Right lobe of liver (tissue), 6 donors: ENCODE measurements at regions of chr3 and their contacts with region 1.

Region 1: DNA sequence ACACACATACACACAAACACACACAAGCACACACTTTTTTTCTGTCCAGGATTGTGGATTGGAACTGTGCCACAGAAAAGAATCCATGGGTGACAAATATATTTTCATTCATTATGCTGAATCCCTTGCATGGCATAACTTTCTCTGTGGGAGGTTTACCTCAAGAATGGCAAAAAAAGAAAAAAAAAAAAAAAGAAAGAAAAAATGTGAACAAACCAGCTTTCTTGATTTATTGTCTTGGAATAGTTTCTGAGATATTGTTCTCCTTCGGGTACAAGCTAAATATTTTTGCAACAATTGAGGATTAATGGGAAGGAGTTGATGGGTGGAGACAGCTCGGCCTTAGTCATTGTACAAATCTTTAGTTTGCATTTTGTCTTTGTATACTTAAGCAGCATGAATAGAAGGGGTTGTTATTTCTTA is 153.1 kb downstream of the GMNC start:
- DNase-seq: no peak
- ATAC-seq: no peak
- H3K4me3 ChIP-seq: no peak overlapping the region
- H3K27ac ChIP-seq: no peak overlapping the region
- H3K4me1 ChIP-seq: no peaks in the 10 kb centered on the region
- H3K27me3 ChIP-seq: no peaks in the 10 kb centered on the region
- CTCF ChIP-seq: no peak
- POLR2A ChIP-seq: no peak

Region 2: GRCh38 chr3:190666821-190667220 is 42.5 kb before region 1 on chr3:
- intact Hi-C with region 1: no loop called
- DNase-seq: no peak
- ATAC-seq: no peak
- H3K4me3 ChIP-seq: no peak overlapping the region
- H3K27ac ChIP-seq: no peak overlapping the region
- H3K4me1 ChIP-seq: no peaks in the 10 kb centered on the region
- H3K27me3 ChIP-seq: no peaks in the 10 kb centered on the region
- CTCF ChIP-seq: no peak
- POLR2A ChIP-seq: no peak

Region 3: DNA sequence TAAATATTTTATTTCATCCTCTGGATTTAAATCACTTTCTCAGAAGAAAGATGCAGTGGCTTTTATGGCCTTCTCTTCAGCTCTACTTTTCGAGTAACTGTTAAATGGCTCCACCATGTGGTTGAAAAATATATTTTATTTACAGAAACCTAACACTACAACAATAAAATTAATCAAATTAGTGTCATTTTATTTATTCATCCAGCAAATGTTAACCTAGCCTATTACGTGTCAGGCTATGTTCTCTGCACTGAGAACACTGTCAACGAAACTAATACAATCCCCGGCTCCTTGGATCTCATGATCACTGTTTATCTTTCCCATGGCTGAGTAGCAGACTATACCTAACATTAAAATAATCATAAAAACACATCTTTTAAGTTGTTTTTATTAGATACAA is 341.7 kb after region 1 on chr3:
- intact Hi-C with region 1: loop called in 1 of 2 experiments (anchors 5 kb)
- DNase-seq: no peak
- ATAC-seq: peak; percentile 47 to 67 (median 64)
- H3K4me3 ChIP-seq: no peak overlapping the region
- H3K27ac ChIP-seq: no peak overlapping the region
- H3K4me1 ChIP-seq: no peaks in the 10 kb centered on the region
- H3K27me3 ChIP-seq: no peaks in the 10 kb centered on the region
- CTCF ChIP-seq: peak; percentile 47 to 66 (median 54)
- POLR2A ChIP-seq: no peak